ENCODE measurements at regions of chr7 and their contacts with region 1.

Region 1: GRCh38 chr7:22001345-22002004 is 55.8 kb upstream of the CDCA7L start:
- DNase-seq: peak in 7 of 9 donors; percentile 14 to 69 (median 61)
- ATAC-seq: peak; percentile 81
- H3K4me3 ChIP-seq: no peak overlapping the region
- H3K4me3 Mint-ChIP-seq: peak overlapping the region in 7 of 10 donors; percentile 37 to 75 (median 61)
- H3K27ac ChIP-seq: no peak overlapping the region
- H3K27ac Mint-ChIP-seq: peak overlapping the region in 2 of 9 donors; percentile 26 to 53
- H3K4me1 ChIP-seq: no peaks in the 10 kb centered on the region
- H3K4me1 Mint-ChIP-seq: peaks cover 0 to 7% (median 2%) of the 10 kb centered on the region in 7 donors
- H3K27me3 ChIP-seq: no peaks in the 10 kb centered on the region
- H3K27me3 Mint-ChIP-seq: peaks cover 0 to 15% (median 9%) of the 10 kb centered on the region in 5 donors

Region 2: DNA sequence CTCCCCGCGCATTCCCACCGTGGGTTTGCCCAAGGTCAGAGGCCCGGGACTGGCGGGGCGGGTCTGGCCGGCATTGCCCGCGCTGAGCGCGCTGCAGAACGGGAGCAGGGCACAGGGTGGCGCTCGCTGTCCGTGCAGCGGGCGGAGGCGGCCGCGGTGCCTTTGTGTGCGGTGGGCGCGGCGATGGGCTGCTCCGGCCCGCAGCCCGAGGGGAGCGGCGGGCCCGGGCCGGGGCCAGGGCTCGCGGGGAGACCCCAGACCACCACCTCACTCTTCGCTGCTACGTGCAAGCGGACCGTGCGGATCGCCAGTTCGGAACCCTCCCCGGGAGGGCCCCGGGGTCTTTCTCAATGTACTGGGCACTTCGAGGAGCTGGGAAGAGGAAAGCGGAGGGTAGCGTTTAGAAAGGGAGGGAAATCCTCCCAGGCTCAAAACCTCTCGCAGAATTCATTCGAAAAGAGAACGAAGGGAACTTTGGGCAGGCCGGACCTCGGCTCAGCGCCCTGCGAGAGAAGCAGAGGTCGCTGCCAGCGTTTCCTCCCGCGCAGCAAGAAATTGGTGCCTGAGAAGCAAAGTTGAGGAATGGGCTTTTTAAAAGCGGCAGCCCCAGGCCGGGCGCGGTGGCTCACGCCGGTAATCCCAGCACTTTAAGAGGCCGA is 1223.3 kb before region 1 on chr7:
- CTCF ChIA-PET with region 1: no interaction called
- POLR2A ChIA-PET with region 1: no interaction called
- intact Hi-C with region 1: loop called (anchors 5 to 10 kb)
- DNase-seq: no peak
- ATAC-seq: peak; percentile 53
- H3K4me3 ChIP-seq: no peak overlapping the region
- H3K4me3 Mint-ChIP-seq: peak overlapping the region in 5 of 10 donors; percentile 9 to 91 (median 14)
- H3K27ac ChIP-seq: no peak overlapping the region
- H3K27ac Mint-ChIP-seq: peak overlapping the region in 1 of 9 donors; percentile 11
- H3K4me1 ChIP-seq: no peaks in the 10 kb centered on the region
- H3K4me1 Mint-ChIP-seq: peaks cover 8 to 18% (median 14%) of the 10 kb centered on the region in 7 donors
- H3K27me3 ChIP-seq: peaks cover 4 to 16% of the 10 kb centered on the region in 2 donors
- H3K27me3 Mint-ChIP-seq: peaks cover 79 to 89% (median 87%) of the 10 kb centered on the region in 5 donors

Region 3: DNA sequence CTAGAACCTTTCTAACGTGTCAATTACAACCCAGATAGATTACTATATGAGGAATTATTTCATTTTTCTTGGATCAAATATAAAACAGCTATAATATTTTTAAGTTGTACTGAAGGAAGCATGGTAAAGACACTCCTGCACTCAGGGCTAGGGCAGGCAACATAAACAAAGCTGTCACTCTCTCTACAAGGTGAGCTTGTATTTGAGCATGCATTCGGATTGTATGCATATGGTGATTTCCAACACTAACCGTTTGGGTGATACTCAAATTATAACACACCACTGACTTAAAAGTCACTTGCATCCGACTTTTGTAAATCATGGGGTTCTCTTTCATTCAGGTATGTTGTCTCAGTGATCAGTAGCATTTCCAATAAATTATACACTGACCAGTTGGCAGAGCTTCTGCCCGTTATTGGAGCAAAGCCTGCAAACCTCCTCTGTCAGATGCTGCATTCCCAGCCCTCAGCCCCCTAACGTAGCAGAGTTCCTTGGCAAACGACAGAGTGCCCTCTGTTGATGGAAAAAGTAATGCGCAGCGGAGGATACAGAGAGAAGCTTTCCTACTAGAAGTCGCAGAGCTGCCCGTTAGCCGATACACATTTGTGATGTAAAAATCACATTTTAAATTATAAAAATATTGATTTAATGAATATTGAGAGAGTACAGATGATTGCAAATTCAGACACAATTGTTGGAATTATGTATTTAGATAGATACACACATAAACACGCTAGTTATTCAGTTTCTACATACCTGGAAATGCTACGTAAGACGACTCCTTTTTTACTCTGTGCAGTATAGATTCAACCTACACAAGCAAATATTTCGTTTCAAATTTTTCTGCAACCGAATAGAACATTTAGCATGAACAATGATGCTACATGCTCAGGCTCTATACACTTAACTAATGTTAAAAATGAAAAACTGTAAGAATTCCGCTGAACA is 747.5 kb before region 1 on chr7:
- CTCF ChIA-PET with region 1: interaction called, 4 read pairs
- POLR2A ChIA-PET with region 1: no interaction called
- intact Hi-C with region 1: loop called (anchors 1 kb)
- DNase-seq: peak in 8 of 9 donors; percentile 3 to 49 (median 24)
- ATAC-seq: peak; percentile 71
- H3K4me3 ChIP-seq: no peak overlapping the region
- H3K4me3 Mint-ChIP-seq: peak overlapping the region in 8 of 10 donors; percentile 39 to 66 (median 55)
- H3K27ac ChIP-seq: no peak overlapping the region
- H3K27ac Mint-ChIP-seq: no peak overlapping the region
- H3K4me1 ChIP-seq: no peaks in the 10 kb centered on the region
- H3K4me1 Mint-ChIP-seq: peaks cover 0 to 21% (median 0%) of the 10 kb centered on the region in 7 donors
- H3K27me3 ChIP-seq: peaks cover 4 to 18% of the 10 kb centered on the region in 2 donors
- H3K27me3 Mint-ChIP-seq: peaks cover 62 to 77% (median 68%) of the 10 kb centered on the region in 5 donors

Region 4: DNA sequence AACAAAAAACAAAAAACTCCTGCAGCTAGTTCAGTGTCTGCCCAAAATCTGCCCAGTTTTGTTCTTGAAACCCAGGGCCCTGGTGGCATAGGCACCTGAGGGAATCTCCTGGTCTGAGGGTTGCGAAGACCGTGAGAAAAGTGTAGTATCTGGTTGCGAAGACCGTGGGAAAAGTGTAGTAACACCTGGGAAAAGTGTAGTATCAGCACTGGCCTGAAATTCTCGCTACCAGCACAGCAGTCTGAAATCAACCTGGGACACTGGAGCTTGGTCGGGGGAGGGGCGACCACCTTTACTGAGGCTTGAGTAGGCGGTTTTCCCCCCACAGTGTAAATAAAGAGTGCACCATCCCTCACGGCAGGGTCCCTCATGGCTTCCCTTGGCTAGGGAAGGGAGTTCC is 656.1 kb before region 1 on chr7:
- CTCF ChIA-PET with region 1: no interaction called
- POLR2A ChIA-PET with region 1: no interaction called
- intact Hi-C with region 1: no loop called
- DNase-seq: no peak
- ATAC-seq: no peak
- H3K4me3 ChIP-seq: no peak overlapping the region
- H3K4me3 Mint-ChIP-seq: no peak overlapping the region
- H3K27ac ChIP-seq: no peak overlapping the region
- H3K27ac Mint-ChIP-seq: no peak overlapping the region
- H3K4me1 ChIP-seq: no peaks in the 10 kb centered on the region
- H3K4me1 Mint-ChIP-seq: peaks cover 0 to 46% (median 0%) of the 10 kb centered on the region in 7 donors
- H3K27me3 ChIP-seq: no peaks in the 10 kb centered on the region
- H3K27me3 Mint-ChIP-seq: no peaks in the 10 kb centered on the region

Region 5: GRCh38 chr7:21514062-21514461 is 487.4 kb before region 1 on chr7:
- CTCF ChIA-PET with region 1: no interaction called
- POLR2A ChIA-PET with region 1: no interaction called
- intact Hi-C with region 1: loop called in 1 of 2 experiments (anchors 10 kb)
- DNase-seq: no peak
- ATAC-seq: no peak
- H3K4me3 ChIP-seq: no peak overlapping the region
- H3K4me3 Mint-ChIP-seq: no peak overlapping the region
- H3K27ac ChIP-seq: no peak overlapping the region
- H3K27ac Mint-ChIP-seq: no peak overlapping the region
- H3K4me1 ChIP-seq: no peaks in the 10 kb centered on the region
- H3K4me1 Mint-ChIP-seq: peaks cover 0 to 3% (median 0%) of the 10 kb centered on the region in 7 donors
- H3K27me3 ChIP-seq: no peaks in the 10 kb centered on the region
- H3K27me3 Mint-ChIP-seq: no peaks in the 10 kb centered on the region

Region 6: GRCh38 chr7:21568762-21569161 is 432.7 kb before region 1 on chr7:
- CTCF ChIA-PET with region 1: interaction called, 3 read pairs
- POLR2A ChIA-PET with region 1: no interaction called
- intact Hi-C with region 1: loop called in 1 of 2 experiments (anchors 1 kb)
- DNase-seq: peak in 2 of 9 donors; percentile 7 to 16
- ATAC-seq: no peak
- H3K4me3 ChIP-seq: no peak overlapping the region
- H3K4me3 Mint-ChIP-seq: no peak overlapping the region
- H3K27ac ChIP-seq: no peak overlapping the region
- H3K27ac Mint-ChIP-seq: no peak overlapping the region
- H3K4me1 ChIP-seq: no peaks in the 10 kb centered on the region
- H3K4me1 Mint-ChIP-seq: no peaks in the 10 kb centered on the region
- H3K27me3 ChIP-seq: no peaks in the 10 kb centered on the region
- H3K27me3 Mint-ChIP-seq: peaks cover 0 to 12% (median 3%) of the 10 kb centered on the region in 5 donors

Region 7: DNA sequence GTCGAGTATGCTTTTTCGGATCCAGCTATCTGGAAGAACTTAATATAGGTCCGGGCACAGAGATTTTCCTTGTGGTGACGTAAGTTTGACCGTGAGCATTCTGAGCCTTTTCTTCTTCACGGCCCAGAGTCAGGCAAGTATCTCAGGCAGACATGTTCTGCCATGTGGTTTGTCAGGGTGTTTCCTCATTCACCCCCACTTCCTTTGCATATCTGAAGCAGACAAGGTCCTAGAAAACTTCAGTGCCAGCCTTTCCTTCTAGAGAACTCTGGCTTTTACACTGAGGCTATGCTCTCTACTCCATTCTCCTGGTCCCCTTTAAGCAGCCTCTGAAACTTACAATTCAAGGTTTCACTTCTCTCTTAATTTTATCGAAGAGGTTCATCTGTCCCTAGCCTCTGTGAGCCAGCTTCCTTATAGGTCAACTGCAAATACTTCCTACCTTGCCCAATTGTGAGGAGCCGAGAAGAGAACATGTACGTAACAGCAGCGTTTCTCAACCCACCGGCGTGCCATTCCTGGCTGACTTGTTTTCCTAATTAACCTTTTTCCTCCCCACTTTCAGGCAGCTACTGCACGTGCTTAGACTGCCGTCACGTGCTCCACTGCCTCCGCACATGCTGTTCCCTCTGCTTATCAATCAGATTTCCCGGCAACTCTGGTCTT is 103.1 kb before region 1 on chr7:
- CTCF ChIA-PET with region 1: no interaction called
- POLR2A ChIA-PET with region 1: no interaction called
- intact Hi-C with region 1: loop called in 1 of 2 experiments (anchors 5 kb)
- DNase-seq: peak in 6 of 9 donors; percentile 36 to 59 (median 48)
- ATAC-seq: peak; percentile 77
- H3K4me3 ChIP-seq: peak overlapping the region; percentile 46
- H3K4me3 Mint-ChIP-seq: peak overlapping the region; percentile 81 to 90 (median 86)
- H3K27ac ChIP-seq: peak overlapping the region; percentile 46
- H3K27ac Mint-ChIP-seq: peak overlapping the region; percentile 90 to 98 (median 96)
- H3K4me1 ChIP-seq: peaks cover 0 to 19% of the 10 kb centered on the region in 2 donors
- H3K4me1 Mint-ChIP-seq: peaks cover 17 to 38% (median 25%) of the 10 kb centered on the region in 7 donors
- H3K27me3 ChIP-seq: no peaks in the 10 kb centered on the region
- H3K27me3 Mint-ChIP-seq: no peaks in the 10 kb centered on the region

Region 8: DNA sequence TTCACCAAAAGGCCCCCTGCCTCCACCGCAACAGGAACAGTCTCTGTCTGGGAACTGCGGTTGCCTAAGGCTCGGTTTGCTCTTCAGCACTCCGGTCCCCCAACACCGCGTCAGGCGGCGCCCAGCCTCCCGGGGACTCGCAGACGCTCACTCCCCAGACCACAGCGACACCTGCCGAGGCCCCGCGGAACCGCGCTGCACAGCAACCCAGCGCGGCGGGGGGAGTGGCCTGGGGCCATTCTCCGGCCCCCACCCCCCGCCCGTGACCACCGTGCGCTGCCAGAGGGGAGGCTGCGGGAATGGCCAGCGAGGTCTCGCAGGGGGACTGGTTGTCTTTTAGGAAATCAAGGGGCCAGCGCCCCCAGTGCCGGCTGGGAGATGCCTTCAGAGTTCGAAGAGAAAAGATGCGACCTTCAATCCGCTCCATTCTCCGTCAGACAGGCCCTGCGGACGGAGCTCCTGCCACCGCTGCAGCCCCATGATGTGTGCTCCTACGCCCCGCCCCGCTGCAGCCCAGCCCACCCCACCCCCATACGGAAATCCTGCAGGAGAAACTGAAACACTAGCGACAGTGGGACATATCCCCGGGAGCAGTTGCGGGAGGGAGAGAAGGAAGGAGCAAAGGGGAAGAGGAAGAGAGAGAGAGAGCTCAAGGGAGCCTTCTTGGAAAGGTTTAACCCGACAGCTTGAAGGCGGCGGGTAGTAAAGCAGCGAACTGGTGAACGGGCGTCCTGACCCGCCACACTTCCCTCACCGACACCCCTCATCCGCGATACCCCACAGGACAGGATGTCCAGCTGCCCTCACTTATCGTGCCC is 81.6 kb after region 1 on chr7:
- CTCF ChIA-PET with region 1: no interaction called
- POLR2A ChIA-PET with region 1: no interaction called
- intact Hi-C with region 1: loop called in 1 of 2 experiments (anchors 1 kb)
- DNase-seq: peak; percentile 59 to 86 (median 73)
- ATAC-seq: peak; percentile 99
- H3K4me3 ChIP-seq: peak overlapping the region; percentile 54
- H3K4me3 Mint-ChIP-seq: peak overlapping the region; percentile 79 to 90 (median 86)
- H3K27ac ChIP-seq: peak overlapping the region; percentile 57
- H3K27ac Mint-ChIP-seq: peak overlapping the region in 7 of 9 donors; percentile 28 to 80 (median 62)
- H3K4me1 ChIP-seq: peaks cover 5 to 7% of the 10 kb centered on the region in 2 donors
- H3K4me1 Mint-ChIP-seq: peaks cover 6 to 18% (median 13%) of the 10 kb centered on the region in 7 donors
- H3K27me3 ChIP-seq: no peaks in the 10 kb centered on the region
- H3K27me3 Mint-ChIP-seq: peaks cover 17 to 50% (median 21%) of the 10 kb centered on the region in 5 donors